ENCODE measurements at regions of chr7 and their contacts with region 1.

Region 1: DNA sequence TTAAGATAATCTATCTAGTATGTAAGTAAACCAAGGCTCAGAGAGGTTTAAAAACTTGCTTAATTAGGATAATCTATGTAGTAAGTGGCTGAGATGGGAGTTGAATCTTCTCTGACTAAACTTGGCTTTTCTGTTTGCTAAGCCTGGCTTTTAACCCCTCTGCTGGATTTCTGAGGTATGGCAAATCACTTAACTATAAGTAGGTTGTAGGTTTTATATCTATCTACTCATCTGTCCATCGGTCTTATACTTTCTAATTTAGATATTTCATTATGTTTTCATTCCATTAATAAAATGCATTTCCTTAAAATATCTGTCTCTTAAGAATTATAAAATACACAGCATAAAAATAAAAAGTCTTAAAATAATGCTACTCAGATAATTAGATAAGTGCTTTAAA is 59.4 kb downstream of the ST7 start:
- DNase-seq: no peak
- H3K4me3 ChIP-seq: no peak overlapping the region
- H3K27me3 ChIP-seq: no peaks in the 10 kb centered on the region
- CTCF ChIP-seq: peak; percentile 42

Region 2: DNA sequence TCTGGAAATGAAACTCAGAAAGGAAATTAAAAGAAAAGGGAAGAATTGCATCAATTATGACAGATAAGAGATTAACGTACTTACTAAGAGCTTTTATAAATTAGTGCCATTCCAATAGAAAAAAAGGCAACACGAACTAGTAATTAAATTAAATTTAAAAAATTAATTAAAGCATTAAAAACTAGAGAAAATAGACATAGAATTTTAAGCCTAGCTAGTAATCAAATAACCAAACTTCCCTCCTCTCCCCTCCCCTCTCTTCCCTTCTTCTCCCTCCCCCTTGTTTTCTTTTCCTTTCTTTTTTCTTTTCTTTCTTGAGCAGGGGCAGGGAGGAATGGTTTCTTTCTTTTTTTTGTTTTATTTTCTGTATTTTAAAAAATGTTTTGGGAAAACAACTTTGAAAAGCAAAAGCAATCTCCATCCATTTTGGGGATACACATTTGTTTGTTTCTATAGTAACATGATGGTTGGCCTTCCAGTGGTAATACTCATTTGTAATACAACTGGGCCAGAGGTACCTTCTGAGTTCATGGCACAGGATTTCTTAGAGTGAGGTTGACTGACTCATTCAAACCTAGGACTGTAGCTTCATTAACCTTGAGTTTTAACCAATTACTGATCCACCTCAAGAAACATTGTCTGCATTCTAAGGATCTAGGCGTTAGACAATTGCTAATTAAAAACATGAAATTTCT is 73.2 kb after region 1 on chr7:
- CTCF ChIA-PET with region 1: no interaction called
- POLR2A ChIA-PET with region 1: no interaction called
- DNase-seq: no peak
- H3K4me3 ChIP-seq: no peak overlapping the region
- H3K27me3 ChIP-seq: no peaks in the 10 kb centered on the region
- CTCF ChIP-seq: no peak

Region 3: DNA sequence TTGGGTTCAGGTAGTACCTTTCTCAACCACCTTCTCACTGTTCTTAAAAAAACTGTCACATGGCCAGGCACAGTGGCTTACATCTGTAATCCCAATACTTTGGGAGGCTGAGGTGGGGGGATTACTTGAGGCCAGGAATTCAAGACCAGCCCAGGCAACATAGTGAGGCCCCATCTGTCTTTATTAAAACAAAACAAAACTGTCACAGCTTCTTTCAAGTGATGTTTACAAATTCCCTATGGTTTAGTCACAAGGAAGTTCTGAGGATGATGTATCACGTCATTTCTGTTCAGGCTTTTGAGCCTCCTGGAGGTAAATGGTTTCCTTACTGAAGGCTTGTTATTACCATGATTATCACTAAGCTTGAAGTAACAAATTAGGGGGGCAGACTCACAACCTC is 653.3 kb after region 1 on chr7:
- CTCF ChIA-PET with region 1: no interaction called
- POLR2A ChIA-PET with region 1: interaction called, 19 read pairs
- DNase-seq: no peak
- H3K4me3 ChIP-seq: no peak overlapping the region
- H3K27me3 ChIP-seq: no peaks in the 10 kb centered on the region; the same call in 1 of the 2 replicates
- CTCF ChIP-seq: no peak

Measured in BJ (cell line).